Calu3 (cell line): ENCODE measurements at regions of chr3 and their contacts with region 1.

Region 1: DNA sequence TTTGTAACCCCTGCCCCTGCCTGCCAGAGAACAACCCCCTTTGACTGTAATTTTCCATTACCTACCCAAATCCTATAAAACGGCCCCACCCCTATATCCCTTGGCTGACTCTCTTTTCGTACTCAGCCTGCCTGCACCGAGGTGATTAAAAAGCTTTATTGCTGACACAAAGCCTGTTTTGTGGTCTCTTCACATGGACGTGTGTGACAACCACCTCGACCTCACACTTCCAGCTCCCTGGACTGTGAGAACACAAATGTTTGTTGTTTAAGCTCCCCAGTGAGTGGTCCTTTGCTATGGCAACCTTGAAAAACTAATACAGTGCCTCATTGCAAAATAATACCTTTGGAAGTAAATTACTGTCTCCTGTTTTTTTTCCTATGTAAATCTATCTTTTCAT is 299.2 kb upstream of the POU1F1 start:
- DNase-seq: no peak
- H3K4me3 Mint-ChIP-seq: no peak overlapping the region
- H3K27ac Mint-ChIP-seq: no peak overlapping the region
- H3K4me1 Mint-ChIP-seq: no peaks in the 10 kb centered on the region
- H3K27me3 Mint-ChIP-seq: no peaks in the 10 kb centered on the region
- CTCF ChIP-seq: no peak

Region 2: DNA sequence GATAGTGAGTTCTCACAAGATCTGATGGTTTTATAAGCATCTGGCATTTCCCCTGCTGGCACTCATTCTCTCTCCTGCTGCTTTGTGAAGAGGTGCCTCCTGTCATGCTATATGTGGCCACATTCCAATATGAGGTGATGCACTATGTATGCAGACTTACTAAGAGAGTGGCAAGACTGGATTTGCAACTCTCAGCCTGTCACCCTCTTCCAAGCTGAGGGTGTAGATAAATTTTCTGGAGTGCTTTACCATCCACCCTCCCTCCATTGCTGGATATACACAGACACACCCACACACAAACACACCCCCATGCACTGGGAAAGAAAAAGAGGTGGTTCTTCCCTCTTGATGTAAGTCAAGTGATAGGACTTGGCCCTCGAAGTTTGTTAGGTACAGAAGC is 378.7 kb before region 1 on chr3:
- CTCF ChIA-PET with region 1: no interaction called
- intact Hi-C with region 1: no loop called
- DNase-seq: no peak
- H3K4me3 Mint-ChIP-seq: no peak overlapping the region
- H3K27ac Mint-ChIP-seq: no peak overlapping the region
- H3K4me1 Mint-ChIP-seq: peaks cover 10% of the 10 kb centered on the region
- H3K27me3 Mint-ChIP-seq: no peaks in the 10 kb centered on the region
- CTCF ChIP-seq: no peak

Region 3: GRCh38 chr3:87446849-87447387 is 128.6 kb before region 1 on chr3:
- CTCF ChIA-PET with region 1: no interaction called
- intact Hi-C with region 1: no loop called
- DNase-seq: no peak
- H3K4me3 Mint-ChIP-seq: no peak overlapping the region
- H3K27ac Mint-ChIP-seq: no peak overlapping the region
- H3K4me1 Mint-ChIP-seq: no peaks in the 10 kb centered on the region
- H3K27me3 Mint-ChIP-seq: no peaks in the 10 kb centered on the region
- CTCF ChIP-seq: no peak

Region 4: GRCh38 chr3:87598661-87599318 is 23.2 kb after region 1 on chr3:
- CTCF ChIA-PET with region 1: no interaction called
- intact Hi-C with region 1: loop called (anchors 2 kb)
- DNase-seq: no peak
- H3K4me3 Mint-ChIP-seq: no peak overlapping the region
- H3K27ac Mint-ChIP-seq: no peak overlapping the region
- H3K4me1 Mint-ChIP-seq: no peaks in the 10 kb centered on the region
- H3K27me3 Mint-ChIP-seq: no peaks in the 10 kb centered on the region
- CTCF ChIP-seq: no peak

Region 5: DNA sequence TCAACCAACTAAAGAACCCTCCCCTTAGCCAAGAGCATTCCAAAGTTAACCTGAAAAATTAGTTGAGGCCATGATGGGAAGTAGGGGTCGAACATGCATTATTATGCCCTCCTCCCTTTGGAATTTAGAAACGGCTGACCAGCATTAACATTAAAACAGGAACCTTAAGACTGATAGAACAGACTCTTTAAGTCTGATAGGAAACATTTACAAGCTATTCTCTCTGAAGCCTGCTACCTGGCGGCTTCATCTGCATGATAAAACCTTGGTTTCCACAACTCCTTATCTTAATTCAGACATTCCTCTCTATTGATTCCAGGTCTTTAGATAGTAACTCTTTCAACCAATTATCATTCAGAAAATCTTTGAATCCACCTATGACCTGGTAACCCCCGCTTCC is 152.2 kb after region 1 on chr3:
- CTCF ChIA-PET with region 1: no interaction called
- intact Hi-C with region 1: no loop called
- DNase-seq: no peak
- H3K4me3 Mint-ChIP-seq: no peak overlapping the region
- H3K27ac Mint-ChIP-seq: no peak overlapping the region
- H3K4me1 Mint-ChIP-seq: no peaks in the 10 kb centered on the region
- H3K27me3 Mint-ChIP-seq: no peaks in the 10 kb centered on the region
- CTCF ChIP-seq: no peak

Region 6: GRCh38 chr3:87987952-87988351 is 412.4 kb after region 1 on chr3:
- CTCF ChIA-PET with region 1: no interaction called
- intact Hi-C with region 1: no loop called
- DNase-seq: no peak
- H3K4me3 Mint-ChIP-seq: no peak overlapping the region
- H3K27ac Mint-ChIP-seq: no peak overlapping the region
- H3K4me1 Mint-ChIP-seq: no peaks in the 10 kb centered on the region
- H3K27me3 Mint-ChIP-seq: no peaks in the 10 kb centered on the region
- CTCF ChIP-seq: no peak